B cell (primary cell): ENCODE measurements at regions of chr2 and their contacts with region 1.

Region 1: GRCh38 chr2:177164584-177165052 is 48.0 kb upstream of the HNRNPA3 start:
- DNase-seq: peak; percentile 86
- ATAC-seq: peak; percentile 66
- H3K4me3 ChIP-seq: peak overlapping the region; percentile 38 to 71 (median 50)
- H3K4me3 Mint-ChIP-seq: no peak overlapping the region
- H3K27ac ChIP-seq: peak overlapping the region; percentile 81 to 90
- H3K27ac Mint-ChIP-seq: no peak overlapping the region
- H3K4me1 ChIP-seq: peaks cover 19 to 25% of the 10 kb centered on the region in 2 donors
- H3K4me1 Mint-ChIP-seq: peaks cover 22% of the 10 kb centered on the region
- H3K27me3 ChIP-seq: no peaks in the 10 kb centered on the region
- H3K27me3 Mint-ChIP-seq: peaks cover 4% of the 10 kb centered on the region
- CTCF ChIP-seq: peak; percentile 100

Region 2: DNA sequence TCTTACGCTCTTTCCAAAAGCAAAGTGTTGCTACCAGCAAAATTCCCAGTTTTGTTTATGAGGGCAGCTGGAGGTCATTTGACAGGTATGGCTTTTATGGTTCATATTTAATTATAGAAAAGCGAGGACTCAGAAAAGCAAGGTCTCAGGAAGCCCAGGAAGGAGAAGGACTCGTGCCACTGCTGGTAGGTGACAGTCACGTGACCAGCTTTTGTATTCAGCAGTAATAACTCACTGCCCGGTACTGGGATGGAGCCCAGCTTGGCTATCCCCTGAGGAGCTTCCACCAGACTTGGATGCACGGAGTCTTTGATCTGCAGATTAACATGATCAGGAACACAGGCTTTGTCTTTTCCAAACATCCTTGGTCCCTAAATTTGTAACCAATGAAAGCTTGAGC is 203.9 kb before region 1 on chr2:
- CTCF ChIA-PET with region 1: no interaction called
- POLR2A ChIA-PET with region 1: no interaction called
- intact Hi-C with region 1: no loop called
- DNase-seq: no peak
- ATAC-seq: no peak
- H3K4me3 ChIP-seq: no peak overlapping the region
- H3K4me3 Mint-ChIP-seq: no peak overlapping the region
- H3K27ac ChIP-seq: no peak overlapping the region
- H3K27ac Mint-ChIP-seq: no peak overlapping the region
- H3K4me1 ChIP-seq: no peaks in the 10 kb centered on the region
- H3K4me1 Mint-ChIP-seq: no peaks in the 10 kb centered on the region
- H3K27me3 ChIP-seq: no peaks in the 10 kb centered on the region
- H3K27me3 Mint-ChIP-seq: peaks cover 24% of the 10 kb centered on the region
- CTCF ChIP-seq: no peak

Region 3: DNA sequence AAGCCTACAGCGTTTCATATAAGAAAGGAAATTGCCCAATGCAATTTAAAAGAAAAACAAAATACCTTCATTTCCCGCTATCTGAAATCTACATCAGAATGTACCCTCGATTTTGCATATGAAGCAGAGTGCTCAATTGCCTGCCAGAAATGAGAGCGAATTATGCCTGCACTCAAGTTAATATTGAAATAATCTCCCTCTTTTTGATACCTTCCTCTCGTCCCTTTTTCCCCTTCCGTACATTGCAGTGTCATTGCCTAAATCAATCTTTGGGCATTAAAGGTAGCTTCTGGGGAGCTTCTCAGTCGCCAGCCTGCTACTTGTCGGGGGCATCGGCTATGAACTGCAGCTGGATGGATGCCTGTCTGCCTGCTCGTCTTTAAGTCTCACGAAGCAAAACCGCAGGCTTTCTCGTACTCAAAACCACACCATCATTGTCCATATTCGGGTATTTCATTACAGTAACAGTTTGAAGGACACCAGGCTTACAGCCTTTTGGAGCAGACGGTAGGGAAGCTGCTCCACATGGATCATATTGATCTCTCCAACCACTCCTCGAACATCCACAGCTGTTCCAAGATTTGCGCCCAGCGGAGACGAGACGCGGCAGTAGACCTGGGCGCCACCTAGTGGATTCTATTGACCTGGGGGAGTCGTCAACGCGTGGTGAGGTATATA is 16.0 kb before region 1 on chr2:
- CTCF ChIA-PET with region 1: interaction called, 109 read pairs
- POLR2A ChIA-PET with region 1: no interaction called
- intact Hi-C with region 1: no loop called
- DNase-seq: peak; percentile 85
- ATAC-seq: peak; percentile 92
- H3K4me3 ChIP-seq: peak overlapping the region; percentile 42 to 94 (median 67)
- H3K4me3 Mint-ChIP-seq: peak overlapping the region; percentile 92
- H3K27ac ChIP-seq: no peak overlapping the region
- H3K27ac Mint-ChIP-seq: peak overlapping the region; percentile 2
- H3K4me1 ChIP-seq: peaks cover 9 to 13% of the 10 kb centered on the region in 2 donors
- H3K4me1 Mint-ChIP-seq: peaks cover 11% of the 10 kb centered on the region
- H3K27me3 ChIP-seq: peaks cover 0 to 13% (median 10%) of the 10 kb centered on the region in 4 experiments
- H3K27me3 Mint-ChIP-seq: peaks cover 36% of the 10 kb centered on the region
- CTCF ChIP-seq: peak; percentile 99

Region 4: GRCh38 chr2:177229448-177230242 is 65.0 kb after region 1 on chr2:
- CTCF ChIA-PET with region 1: interaction called, 46 read pairs
- POLR2A ChIA-PET with region 1: no interaction called
- intact Hi-C with region 1: no loop called
- DNase-seq: no peak
- ATAC-seq: no peak
- H3K4me3 ChIP-seq: no peak overlapping the region
- H3K4me3 Mint-ChIP-seq: no peak overlapping the region
- H3K27ac ChIP-seq: peak overlapping the region in 1 of 2 donors; percentile 2
- H3K27ac Mint-ChIP-seq: no peak overlapping the region
- H3K4me1 ChIP-seq: no peaks in the 10 kb centered on the region
- H3K4me1 Mint-ChIP-seq: peaks cover 20% of the 10 kb centered on the region
- H3K27me3 ChIP-seq: no peaks in the 10 kb centered on the region
- H3K27me3 Mint-ChIP-seq: no peaks in the 10 kb centered on the region
- CTCF ChIP-seq: no peak

Region 5: GRCh38 chr2:177296040-177296439 is 131.4 kb after region 1 on chr2:
- CTCF ChIA-PET with region 1: interaction called, 162 read pairs
- POLR2A ChIA-PET with region 1: interaction called, 5 read pairs
- intact Hi-C with region 1: loop called (anchors 1 kb)
- DNase-seq: peak; percentile 66
- ATAC-seq: peak; percentile 45
- H3K4me3 ChIP-seq: no peak overlapping the region
- H3K4me3 Mint-ChIP-seq: no peak overlapping the region
- H3K27ac ChIP-seq: no peak overlapping the region
- H3K27ac Mint-ChIP-seq: no peak overlapping the region
- H3K4me1 ChIP-seq: peaks cover 0 to 2% of the 10 kb centered on the region in 2 donors
- H3K4me1 Mint-ChIP-seq: peaks cover 4% of the 10 kb centered on the region
- H3K27me3 ChIP-seq: no peaks in the 10 kb centered on the region
- H3K27me3 Mint-ChIP-seq: no peaks in the 10 kb centered on the region
- CTCF ChIP-seq: peak; percentile 69

Region 6: DNA sequence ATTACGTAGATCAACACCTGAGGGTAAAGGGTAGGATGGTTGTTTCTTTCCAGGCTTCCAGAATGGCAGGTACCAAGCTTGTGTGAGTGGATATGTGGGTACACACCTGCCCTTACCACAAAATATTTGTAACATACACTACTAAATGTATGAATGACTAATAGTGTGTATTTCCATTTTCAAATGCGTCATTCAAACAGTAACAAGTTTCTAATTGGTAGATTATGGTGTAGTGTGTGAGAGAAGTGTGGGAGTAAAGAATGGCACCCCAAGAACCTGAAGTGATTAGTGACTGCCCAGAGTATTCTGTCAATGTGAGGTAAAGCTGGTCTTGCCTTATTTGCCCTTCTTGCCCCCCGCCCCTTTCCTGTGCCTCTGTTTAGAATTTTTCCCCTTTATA is 249.1 kb after region 1 on chr2:
- CTCF ChIA-PET with region 1: interaction called, 87 read pairs
- POLR2A ChIA-PET with region 1: no interaction called
- intact Hi-C with region 1: loop called (anchors 1 kb)
- DNase-seq: no peak
- ATAC-seq: no peak
- H3K4me3 ChIP-seq: no peak overlapping the region
- H3K4me3 Mint-ChIP-seq: no peak overlapping the region
- H3K27ac ChIP-seq: no peak overlapping the region
- H3K27ac Mint-ChIP-seq: no peak overlapping the region
- H3K4me1 ChIP-seq: no peaks in the 10 kb centered on the region
- H3K4me1 Mint-ChIP-seq: peaks cover 7% of the 10 kb centered on the region
- H3K27me3 ChIP-seq: no peaks in the 10 kb centered on the region
- H3K27me3 Mint-ChIP-seq: no peaks in the 10 kb centered on the region
- CTCF ChIP-seq: no peak

Region 7: DNA sequence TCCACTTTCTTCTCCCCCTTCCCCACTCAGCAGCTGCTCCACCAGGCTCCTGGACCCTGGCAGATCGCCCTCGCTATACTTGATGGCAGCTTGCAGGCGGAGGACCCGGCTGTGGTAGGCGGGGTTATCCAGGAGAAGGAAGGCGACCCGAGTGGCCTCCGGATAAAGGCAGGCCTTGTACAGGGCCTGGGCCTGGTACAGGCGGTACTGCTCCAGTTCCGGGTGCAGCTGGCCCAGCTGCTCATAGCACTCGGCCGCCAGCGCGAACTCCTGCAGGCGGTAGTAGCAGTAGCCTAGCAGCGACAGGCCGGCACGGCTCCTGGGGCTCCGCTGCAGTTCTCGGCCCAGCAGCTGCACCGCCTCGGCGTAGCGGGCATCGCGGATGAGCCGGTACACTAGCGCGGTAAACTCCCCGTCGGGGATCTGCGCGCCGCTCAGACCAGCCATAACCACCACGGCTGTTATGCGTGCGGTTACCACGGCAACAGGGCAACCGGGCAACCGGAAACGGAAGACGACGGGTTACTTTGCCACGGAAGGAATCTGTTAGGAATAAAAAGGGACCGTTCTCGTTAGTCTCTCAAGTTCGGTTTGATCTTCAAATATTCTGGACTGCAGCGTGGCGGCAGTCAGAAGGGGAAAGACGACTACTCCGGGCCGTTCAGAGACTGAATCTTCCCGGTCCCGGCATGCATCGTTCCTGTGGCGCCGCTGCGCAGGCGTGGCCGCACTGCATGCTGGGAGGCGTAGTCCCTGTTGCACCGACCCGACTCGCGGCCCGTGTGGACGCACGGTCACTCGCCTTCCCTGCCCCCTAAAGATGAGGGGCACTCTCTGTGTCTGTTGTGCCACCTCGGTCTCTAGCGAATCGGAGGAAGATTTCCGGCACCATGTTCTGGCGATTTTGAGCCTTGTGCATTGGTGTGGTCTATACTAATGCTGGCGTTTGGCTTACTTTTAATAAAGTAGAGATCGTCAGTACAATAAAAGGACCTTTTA is 453.9 kb after region 1 on chr2:
- CTCF ChIA-PET with region 1: interaction called, 3 read pairs
- POLR2A ChIA-PET with region 1: no interaction called
- intact Hi-C with region 1: loop called (anchors 5 kb)
- DNase-seq: peak; percentile 97
- ATAC-seq: peak; percentile 88
- H3K4me3 ChIP-seq: peak overlapping the region; percentile 62 to 98 (median 93)
- H3K4me3 Mint-ChIP-seq: peak overlapping the region; percentile 98
- H3K27ac ChIP-seq: peak overlapping the region; percentile 91 to 100
- H3K27ac Mint-ChIP-seq: peak overlapping the region; percentile 100
- H3K4me1 ChIP-seq: peaks cover 9 to 10% of the 10 kb centered on the region in 2 donors
- H3K4me1 Mint-ChIP-seq: peaks cover 11% of the 10 kb centered on the region
- H3K27me3 ChIP-seq: peaks cover 0 to 2% (median 0%) of the 10 kb centered on the region in 4 experiments
- H3K27me3 Mint-ChIP-seq: no peaks in the 10 kb centered on the region
- CTCF ChIP-seq: no peak